ENCODE measurements at regions of chr19 and their contacts with region 1.

Region 1: DNA sequence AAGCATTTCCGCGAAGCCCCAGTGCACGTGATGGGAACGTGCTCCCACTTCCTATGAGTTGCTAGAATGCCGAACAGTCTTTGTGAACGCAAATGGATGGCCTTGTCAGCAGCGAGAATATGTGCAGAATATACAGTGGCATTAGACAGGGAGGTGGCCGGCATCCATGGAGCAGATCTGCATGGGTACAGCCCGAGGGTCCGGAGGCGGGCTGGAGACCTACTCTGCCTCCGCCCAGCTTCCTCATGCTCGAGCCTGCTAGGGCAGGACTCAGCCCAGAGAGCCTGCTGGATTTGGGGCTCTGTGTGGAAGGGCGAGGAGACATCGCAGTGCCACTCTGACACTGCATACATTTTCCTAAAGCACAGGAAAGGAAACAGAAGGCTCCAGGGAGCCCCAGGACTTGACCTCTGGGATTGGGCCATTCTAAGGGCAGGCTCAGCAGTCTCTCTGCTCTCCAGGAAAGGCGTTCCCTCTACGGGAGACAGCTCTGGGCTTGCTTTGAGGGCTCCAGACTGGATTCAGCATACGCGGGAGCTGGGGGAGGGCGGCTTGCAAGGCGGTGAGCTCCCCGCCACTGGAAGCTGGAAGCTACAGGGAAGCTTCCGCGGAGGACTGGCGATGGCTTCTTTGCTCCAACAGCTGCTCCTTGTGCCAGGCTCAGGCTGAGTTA is 55.9 kb upstream of the UQCRFS1 start:
- DNase-seq: no peak
- H3K4me3 ChIP-seq: no peak overlapping the region
- H3K27ac ChIP-seq: no peak overlapping the region
- H3K4me1 ChIP-seq: no peaks in the 10 kb centered on the region
- H3K27me3 ChIP-seq: no peaks in the 10 kb centered on the region
- CTCF ChIP-seq: no peak

Region 2: GRCh38 chr19:29189033-29189360 is 79.9 kb before region 1 on chr19:
- CTCF ChIA-PET with region 1: no interaction called
- dilution Hi-C with region 1: no loop called
- in situ Hi-C with region 1: no loop called
- intact Hi-C with region 1: no loop called
- DNase-seq: no peak
- H3K4me3 ChIP-seq: no peak overlapping the region
- H3K27ac ChIP-seq: no peak overlapping the region
- H3K4me1 ChIP-seq: no peaks in the 10 kb centered on the region
- H3K27me3 ChIP-seq: no peaks in the 10 kb centered on the region
- CTCF ChIP-seq: no peak

Region 3: DNA sequence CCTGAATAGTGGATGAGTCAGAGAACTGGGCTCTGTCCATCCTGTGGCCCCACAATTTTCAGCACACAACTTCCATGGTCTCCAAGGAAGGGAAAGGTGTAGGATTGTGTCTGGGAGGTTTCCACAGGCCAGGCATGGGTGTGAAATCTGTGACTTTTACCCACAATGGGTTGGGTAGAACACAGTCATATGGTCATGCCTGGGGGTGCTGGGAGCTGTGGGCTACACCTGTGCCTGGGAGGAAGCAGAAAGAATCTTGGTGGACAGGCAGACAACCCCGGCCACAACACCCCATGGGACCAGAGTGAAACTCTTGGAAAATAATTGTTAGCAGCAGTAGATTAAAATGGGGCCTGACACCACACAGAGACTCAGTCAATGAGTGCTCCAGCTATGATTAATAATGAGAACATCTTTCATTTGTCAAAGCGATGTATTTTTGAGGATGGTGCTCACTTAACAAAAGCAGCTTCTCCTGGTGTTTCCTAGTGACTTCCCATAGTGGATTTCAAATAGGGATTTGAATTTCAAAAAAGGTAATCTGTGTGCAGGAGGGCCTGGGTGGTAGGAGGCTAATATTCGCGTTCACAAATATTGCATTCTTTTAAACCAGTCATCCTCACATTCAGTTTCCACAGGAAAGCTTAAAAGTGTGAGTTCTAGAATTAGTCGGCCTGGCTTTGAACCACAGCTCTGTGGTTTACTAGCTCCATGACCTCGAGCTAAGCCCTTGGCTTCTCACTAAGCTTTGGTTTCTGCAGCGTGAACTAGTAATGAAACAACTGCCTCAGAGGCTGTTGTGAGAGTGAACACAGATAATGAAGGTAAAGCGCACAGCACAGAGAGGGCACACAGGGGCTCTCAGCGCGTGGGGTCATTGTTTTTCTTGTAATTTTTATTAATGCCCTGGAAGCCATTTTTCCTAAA is 33.4 kb after region 1 on chr19:
- CTCF ChIA-PET with region 1: no interaction called
- dilution Hi-C with region 1: loop called (anchors 5 kb)
- in situ Hi-C with region 1: no loop called
- intact Hi-C with region 1: no loop called
- DNase-seq: no peak
- H3K4me3 ChIP-seq: no peak overlapping the region
- H3K27ac ChIP-seq: no peak overlapping the region
- H3K4me1 ChIP-seq: no peaks in the 10 kb centered on the region
- H3K27me3 ChIP-seq: no peaks in the 10 kb centered on the region
- CTCF ChIP-seq: no peak